RWPE1 (cell line): ENCODE measurements at regions of chr11 and their contacts with region 1.

Region 1: DNA sequence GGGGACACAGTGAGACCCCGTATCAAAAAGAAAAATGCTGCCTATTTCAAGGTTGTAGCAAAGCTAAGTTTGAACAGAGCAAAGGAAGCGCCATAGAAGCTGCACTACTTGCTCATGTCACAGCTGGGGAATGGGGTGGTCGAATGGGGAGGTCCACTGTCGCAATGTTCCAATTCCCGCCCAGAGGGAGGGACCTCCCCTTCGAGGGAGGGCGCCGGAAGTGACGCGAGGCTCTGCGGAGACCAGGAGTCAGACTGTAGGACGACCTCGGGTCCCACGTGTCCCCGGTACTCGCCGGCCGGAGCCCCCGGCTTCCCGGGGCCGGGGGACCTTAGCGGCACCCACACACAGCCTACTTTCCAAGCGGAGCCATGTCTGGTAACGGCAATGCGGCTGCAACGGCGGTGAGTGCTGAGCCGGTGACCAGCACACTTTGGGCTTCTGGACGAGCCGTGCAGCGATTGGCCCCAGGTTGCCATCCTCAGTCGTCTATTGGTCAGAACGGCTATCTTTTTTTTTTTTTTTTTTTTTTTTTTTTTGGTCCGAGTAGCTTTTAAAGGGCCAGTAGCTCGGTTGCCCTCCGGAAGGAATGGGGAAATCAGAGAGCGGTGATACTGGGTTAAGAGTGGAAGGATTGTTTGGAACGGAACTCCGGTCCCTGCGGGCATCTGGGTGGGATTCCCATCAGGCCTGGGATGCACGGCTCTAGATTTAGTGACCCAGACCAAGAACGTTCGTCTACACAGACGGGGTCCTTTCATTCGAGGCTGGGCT is at the start of gene HMBS:
- DNase-seq: peak; percentile 89
- H3K27ac ChIP-seq: peak within 1 kb of the TSS; percentile 88
- CTCF ChIP-seq: no peak

Region 2: GRCh38 chr11:118883368-118884071 is 201.3 kb before region 1 on chr11 and contains the start of gene CXCR5:
- CTCF ChIA-PET with region 1: no interaction called
- POLR2A ChIA-PET with region 1: interaction called, 10 read pairs
- DNase-seq: no peak
- H3K27ac ChIP-seq: no peak within 1 kb of the TSS
- CTCF ChIP-seq: no peak

Region 3: GRCh38 chr11:118956847-118957469 is 127.9 kb before region 1 on chr11:
- CTCF ChIA-PET with region 1: no interaction called
- POLR2A ChIA-PET with region 1: no interaction called
- DNase-seq: no peak
- H3K27ac ChIP-seq: no peak overlapping the region
- CTCF ChIP-seq: peak; percentile 64

Region 4: GRCh38 chr11:119067371-119068222 is 17.3 kb before region 1 on chr11 and contains the start of gene VPS11:
- CTCF ChIA-PET with region 1: no interaction called
- POLR2A ChIA-PET with region 1: interaction called, 23 read pairs
- DNase-seq: peak; percentile 99
- H3K27ac ChIP-seq: peak within 1 kb of the TSS; percentile 90
- CTCF ChIP-seq: no peak

Region 5: GRCh38 chr11:119101759-119102423 is 17.0 kb after region 1 on chr11 and contains the start of gene DPAGT1:
- CTCF ChIA-PET with region 1: no interaction called
- POLR2A ChIA-PET with region 1: interaction called, 12 read pairs
- DNase-seq: peak; percentile 92
- H3K27ac ChIP-seq: peak within 1 kb of the TSS; percentile 97
- CTCF ChIP-seq: no peak

Region 6: GRCh38 chr11:119267645-119268044 is 182.8 kb after region 1 on chr11:
- CTCF ChIA-PET with region 1: no interaction called
- POLR2A ChIA-PET with region 1: interaction called, 10 read pairs
- DNase-seq: no peak
- H3K27ac ChIP-seq: no peak overlapping the region
- CTCF ChIP-seq: no peak

Region 7: DNA sequence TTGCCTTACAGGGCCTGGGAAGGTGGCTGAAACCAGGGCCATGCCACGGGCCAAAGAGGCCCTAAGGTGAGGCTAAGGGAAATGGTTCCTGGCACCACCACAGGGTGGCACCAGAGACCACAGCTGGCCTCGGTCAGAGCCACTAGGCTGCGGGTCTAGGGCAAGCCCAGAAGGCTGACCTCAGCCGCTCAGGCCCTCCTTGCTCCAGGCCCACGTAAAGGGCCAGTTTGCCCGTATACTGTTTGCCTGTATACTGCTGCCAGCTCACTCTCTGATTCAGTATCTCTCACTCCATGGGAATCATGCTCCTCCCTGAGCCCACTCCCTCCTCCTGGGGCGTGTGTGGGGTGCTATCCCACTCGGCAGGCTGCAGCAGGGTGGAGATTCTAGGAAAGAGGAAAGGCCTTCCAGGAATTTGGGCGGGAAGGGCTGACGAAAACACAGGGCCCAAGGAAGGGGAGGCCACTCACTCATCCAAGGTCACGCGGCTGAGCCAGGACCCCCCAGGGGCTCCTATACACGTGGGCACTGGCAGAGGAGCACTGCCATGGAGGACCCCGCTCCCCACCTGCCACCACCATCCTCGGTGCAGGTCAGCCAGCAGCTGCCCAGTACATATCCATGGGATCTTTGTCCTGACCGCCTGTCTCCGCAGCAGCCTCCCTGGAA is 581.7 kb after region 1 on chr11:
- CTCF ChIA-PET with region 1: no interaction called
- POLR2A ChIA-PET with region 1: no interaction called
- DNase-seq: peak; percentile 73
- H3K27ac ChIP-seq: peak overlapping the region; percentile 80
- CTCF ChIP-seq: peak; percentile 88